ENCODE measurements at regions of chr2 and their contacts with region 1.

Region 1: DNA sequence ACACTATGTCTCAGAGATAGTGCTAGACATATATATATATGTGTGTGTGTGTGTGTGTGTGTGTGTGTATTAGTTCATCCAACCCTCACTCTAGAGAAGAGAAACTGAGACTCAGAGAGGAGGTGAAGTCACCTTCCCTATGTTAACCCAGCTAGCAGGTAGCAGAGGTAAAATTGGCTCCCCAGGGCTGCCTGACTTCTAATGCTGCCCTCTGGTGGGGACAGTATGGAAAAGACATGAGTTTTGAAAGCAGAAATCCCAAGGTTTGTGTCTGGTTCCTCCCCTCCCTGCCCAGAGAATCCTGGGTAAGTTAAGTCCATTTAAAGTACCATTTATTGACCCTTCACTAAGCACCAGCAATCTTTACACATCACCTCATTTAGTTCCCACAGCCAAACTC is 137.7 kb downstream of the THNSL2 start:
- DNase-seq: no peak
- H3K4me3 Mint-ChIP-seq: no peak overlapping the region
- H3K27ac Mint-ChIP-seq: no peak overlapping the region
- H3K4me1 Mint-ChIP-seq: no peaks in the 10 kb centered on the region
- H3K27me3 Mint-ChIP-seq: peaks cover 3% of the 10 kb centered on the region

Region 2: GRCh38 chr2:88187038-88187676 is 120.7 kb before region 1 on chr2:
- intact Hi-C with region 1: loop called (anchors 1 kb)
- DNase-seq: no peak
- H3K4me3 Mint-ChIP-seq: no peak overlapping the region
- H3K27ac Mint-ChIP-seq: no peak overlapping the region
- H3K4me1 Mint-ChIP-seq: peaks cover 16% of the 10 kb centered on the region
- H3K27me3 Mint-ChIP-seq: peaks cover 14% of the 10 kb centered on the region

Region 3: DNA sequence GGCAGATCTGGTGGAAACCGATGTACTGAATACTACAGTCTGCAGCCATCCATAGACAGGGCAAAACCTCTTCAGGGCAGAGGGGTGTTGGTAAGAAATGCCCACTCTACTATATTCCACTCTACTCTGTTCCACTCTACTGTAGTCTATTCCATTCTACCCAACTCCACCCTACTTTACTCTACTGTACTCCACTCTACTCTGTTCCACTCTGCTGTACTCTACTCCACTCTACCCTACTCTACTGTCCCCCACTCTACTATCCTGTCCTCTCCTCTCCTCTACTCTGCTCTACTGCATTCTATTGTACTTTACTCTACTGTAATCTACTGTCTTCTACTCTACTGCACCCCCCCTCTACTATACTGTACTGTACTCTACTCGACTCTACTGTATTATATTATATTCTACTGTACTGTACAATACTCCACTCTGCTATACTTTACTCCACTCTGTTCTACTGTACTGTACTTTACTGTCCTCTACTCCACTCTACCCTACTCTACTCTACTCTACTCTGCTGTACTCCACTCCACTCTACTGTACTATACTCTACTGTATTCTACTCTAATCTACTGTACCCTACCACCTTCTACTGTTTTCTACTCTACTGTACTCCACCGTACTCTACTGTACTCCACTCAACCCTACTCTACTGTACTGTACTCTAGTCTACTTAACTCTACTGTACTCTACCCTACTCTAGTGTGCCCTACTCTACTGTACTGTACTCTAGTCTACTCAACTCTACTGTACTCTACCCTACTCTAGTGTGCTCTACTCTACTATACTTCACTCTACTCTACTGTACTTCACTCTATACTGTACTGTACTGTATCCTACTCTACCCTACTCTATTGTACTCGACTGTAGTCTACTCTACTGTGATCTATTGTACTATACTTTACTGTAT is 161.6 kb after region 1 on chr2:
- intact Hi-C with region 1: no loop called
- DNase-seq: no peak
- H3K4me3 Mint-ChIP-seq: no peak overlapping the region
- H3K27ac Mint-ChIP-seq: no peak overlapping the region
- H3K4me1 Mint-ChIP-seq: no peaks in the 10 kb centered on the region
- H3K27me3 Mint-ChIP-seq: peaks cover 2% of the 10 kb centered on the region

Measured in activated T-helper 1 cell treated with anti-CD3 and anti-CD28 coated beads, Interleukin-12 subunit alpha, Interleukin-12 subunit beta, Interleukin-2, Interleukin-4 antibody, amounts not matched to agents 30 ng/mL and 10 ng/mL and 1 ng/mL, durations not matched to agents 14 hours and 24 hours and 36 hours (primary cell).